ENCODE measurements at regions of chr18 and their contacts with region 1.

Region 1: GRCh38 chr18:63936156-63936931 is 12.8 kb upstream of the HMSD start:
- DNase-seq: peak; percentile 35
- ATAC-seq: peak; percentile 94
- H3K4me3 Mint-ChIP-seq: no peak overlapping the region
- H3K27ac Mint-ChIP-seq: no peak overlapping the region
- H3K4me1 Mint-ChIP-seq: peaks cover 3% of the 10 kb centered on the region
- H3K27me3 Mint-ChIP-seq: peaks cover 8% of the 10 kb centered on the region
- CTCF ChIP-seq: no peak

Region 2: DNA sequence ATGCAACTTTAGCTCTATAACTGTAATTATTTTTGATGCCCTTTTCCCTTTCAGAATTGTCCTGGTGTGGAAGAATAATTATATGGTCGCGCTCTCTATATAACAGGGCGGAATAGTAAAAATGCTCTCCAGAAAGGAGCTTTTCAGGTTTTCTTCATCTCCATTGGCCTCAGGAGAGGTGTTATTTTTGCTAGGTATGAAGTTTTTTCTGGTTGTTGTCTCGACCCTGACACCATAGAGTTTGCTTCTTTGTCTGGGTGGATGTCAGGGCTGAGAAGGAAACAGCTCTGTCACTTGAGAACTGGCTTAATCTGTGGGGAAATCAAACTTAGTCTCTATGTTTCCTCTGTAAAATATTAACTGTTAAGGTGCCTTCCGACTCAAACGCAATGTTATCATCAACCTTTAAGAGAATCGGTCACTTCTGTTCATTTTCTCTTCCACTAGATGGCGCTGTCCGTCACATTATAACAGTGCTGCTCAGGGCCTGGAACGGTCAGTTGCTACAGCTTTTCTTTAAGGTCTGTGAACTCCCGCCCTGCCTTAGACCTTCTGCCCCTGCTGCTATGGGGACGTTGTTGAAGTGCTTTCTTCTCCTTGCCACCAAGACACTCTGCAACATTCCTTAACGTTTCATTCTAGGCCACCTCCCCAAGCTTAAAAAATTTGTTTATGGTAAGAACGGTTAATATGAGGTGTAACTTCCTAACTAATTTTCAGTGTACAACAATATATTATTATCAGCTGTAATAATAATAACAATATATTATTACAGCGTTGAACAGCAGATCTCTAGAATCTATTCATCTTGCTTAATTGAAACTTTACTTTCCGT is 417.9 kb before region 1 on chr18:
- CTCF ChIA-PET with region 1: interaction called, 48 read pairs
- POLR2A ChIA-PET with region 1: no interaction called
- intact Hi-C with region 1: loop called (anchors 1 kb)
- DNase-seq: no peak
- ATAC-seq: peak; percentile 60
- H3K4me3 Mint-ChIP-seq: no peak overlapping the region
- H3K27ac Mint-ChIP-seq: no peak overlapping the region
- H3K4me1 Mint-ChIP-seq: peaks cover 3% of the 10 kb centered on the region
- H3K27me3 Mint-ChIP-seq: peaks cover 9% of the 10 kb centered on the region
- CTCF ChIP-seq: no peak

Region 3: GRCh38 chr18:63890950-63891304 is 45.4 kb before region 1 on chr18:
- CTCF ChIA-PET with region 1: interaction called, 3 read pairs
- POLR2A ChIA-PET with region 1: no interaction called
- intact Hi-C with region 1: loop called (anchors 1 kb)
- DNase-seq: no peak
- ATAC-seq: no peak
- H3K4me3 Mint-ChIP-seq: no peak overlapping the region
- H3K27ac Mint-ChIP-seq: no peak overlapping the region
- H3K4me1 Mint-ChIP-seq: no peaks in the 10 kb centered on the region
- H3K27me3 Mint-ChIP-seq: peaks cover 9% of the 10 kb centered on the region
- CTCF ChIP-seq: no peak

Region 4: GRCh38 chr18:63963615-63964256 is 27.4 kb after region 1 on chr18:
- CTCF ChIA-PET with region 1: interaction called, 15 read pairs
- POLR2A ChIA-PET with region 1: no interaction called
- intact Hi-C with region 1: no loop called
- DNase-seq: no peak
- ATAC-seq: peak; percentile 83
- H3K4me3 Mint-ChIP-seq: no peak overlapping the region
- H3K27ac Mint-ChIP-seq: no peak overlapping the region
- H3K4me1 Mint-ChIP-seq: no peaks in the 10 kb centered on the region
- H3K27me3 Mint-ChIP-seq: peaks cover 13% of the 10 kb centered on the region
- CTCF ChIP-seq: no peak

Region 5: GRCh38 chr18:63979409-63979920 is 43.1 kb after region 1 on chr18:
- CTCF ChIA-PET with region 1: no interaction called
- POLR2A ChIA-PET with region 1: no interaction called
- intact Hi-C with region 1: loop called (anchors 2 kb)
- DNase-seq: no peak
- ATAC-seq: peak; percentile 72
- H3K4me3 Mint-ChIP-seq: no peak overlapping the region
- H3K27ac Mint-ChIP-seq: peak overlapping the region; percentile 16
- H3K4me1 Mint-ChIP-seq: peaks cover 27% of the 10 kb centered on the region
- H3K27me3 Mint-ChIP-seq: no peaks in the 10 kb centered on the region
- CTCF ChIP-seq: peak; percentile 89